Heart right ventricle (tissue), 16 donors: ENCODE measurements at regions of chr3 and their contacts with region 1.

Region 1: DNA sequence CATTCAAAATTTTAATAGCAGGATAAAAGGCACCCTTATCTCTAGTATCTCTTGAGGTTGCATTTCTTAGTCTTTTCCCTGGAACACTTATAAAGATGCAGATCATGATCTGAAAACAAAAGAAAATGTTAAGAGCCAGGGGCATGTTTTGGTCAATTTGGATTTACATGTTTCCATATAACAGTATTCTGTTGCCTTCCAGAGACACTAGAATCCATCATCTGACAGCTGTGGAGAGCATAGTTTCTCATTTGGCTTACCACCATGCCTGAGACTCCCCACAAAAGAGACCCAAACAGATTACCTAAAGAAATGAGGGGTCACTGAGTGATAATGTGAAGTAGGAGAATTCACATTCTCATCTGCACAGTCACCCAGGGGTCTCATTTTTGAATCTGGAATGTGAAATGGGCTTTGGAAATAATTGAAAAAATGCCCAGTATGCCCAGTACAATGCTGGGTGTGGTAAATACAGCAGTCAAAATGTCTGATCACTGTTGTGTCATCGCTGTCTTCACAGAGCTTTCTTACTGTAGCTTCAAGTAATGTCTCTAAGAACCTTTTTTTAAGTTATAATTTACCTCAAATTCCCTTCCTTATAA is 79.9 kb upstream of the ZBTB20 start:
- DNase-seq: no peak
- ATAC-seq: no peak
- H3K4me3 ChIP-seq: no peak overlapping the region
- H3K27ac ChIP-seq: no peak overlapping the region
- H3K4me1 ChIP-seq: peaks cover 0 to 9% (median 0%) of the 10 kb centered on the region in 9 donors
- H3K27me3 ChIP-seq: no peaks in the 10 kb centered on the region
- CTCF ChIP-seq: no peak

Region 2: DNA sequence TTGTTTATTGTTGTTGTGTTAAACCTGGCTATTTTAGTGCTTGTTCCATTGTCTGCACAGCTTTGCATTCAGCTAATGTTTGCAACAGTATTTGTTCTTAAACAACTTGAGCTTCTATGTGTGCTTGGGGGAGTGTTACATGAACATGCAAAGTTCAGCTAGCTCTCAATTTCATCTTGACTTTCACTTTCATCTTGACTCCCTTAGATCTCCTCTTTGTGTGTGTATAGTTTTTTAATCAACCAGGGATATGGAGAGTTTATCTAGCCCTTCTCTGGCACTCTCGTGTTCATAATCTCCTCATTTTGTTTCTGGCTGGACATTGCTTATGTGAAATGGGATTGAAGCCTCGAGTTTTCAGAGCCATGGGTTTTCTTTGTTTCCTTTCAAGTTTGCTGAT is 132.6 kb after region 1 on chr3:
- intact Hi-C with region 1: loop called in 1 of 10 experiments (anchors 10 kb)
- DNase-seq: no peak
- ATAC-seq: no peak
- H3K4me3 ChIP-seq: no peak overlapping the region
- H3K27ac ChIP-seq: no peak overlapping the region
- H3K4me1 ChIP-seq: peaks cover 0 to 11% (median 3%) of the 10 kb centered on the region in 9 donors
- H3K27me3 ChIP-seq: no peaks in the 10 kb centered on the region
- CTCF ChIP-seq: no peak

Region 3: DNA sequence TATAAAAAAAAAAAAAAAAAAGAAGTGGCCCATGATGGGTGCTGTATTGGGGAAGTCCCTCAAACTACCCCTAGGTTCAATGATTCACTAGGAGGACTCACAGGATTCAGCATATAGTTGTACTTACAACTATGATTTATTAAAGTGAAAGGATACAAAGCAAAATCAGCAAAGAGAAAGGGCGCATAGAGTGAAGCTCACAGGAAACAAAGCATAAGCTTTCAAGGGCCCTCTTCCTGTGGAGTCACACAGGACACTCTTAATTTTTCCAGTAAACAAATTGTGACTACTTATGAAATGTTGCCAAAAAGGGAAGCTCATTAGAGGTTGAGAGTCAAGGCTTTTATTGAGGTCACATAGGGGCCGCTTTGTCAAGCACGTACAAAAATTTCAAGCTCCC is 242.7 kb after region 1 on chr3:
- intact Hi-C with region 1: no loop called
- DNase-seq: no peak
- ATAC-seq: no peak
- H3K4me3 ChIP-seq: no peak overlapping the region
- H3K27ac ChIP-seq: no peak overlapping the region
- H3K4me1 ChIP-seq: peaks cover 0 to 5% (median 0%) of the 10 kb centered on the region in 9 donors
- H3K27me3 ChIP-seq: no peaks in the 10 kb centered on the region
- CTCF ChIP-seq: no peak

Region 4: GRCh38 chr3:115766587-115767480 is 539.9 kb after region 1 on chr3:
- intact Hi-C with region 1: no loop called
- DNase-seq: no peak
- ATAC-seq: peak in 1 of 8 donors; percentile 53
- H3K4me3 ChIP-seq: no peak overlapping the region
- H3K27ac ChIP-seq: peak overlapping the region in 1 of 10 donors; percentile 14
- H3K4me1 ChIP-seq: peaks cover 0 to 14% (median 0%) of the 10 kb centered on the region in 9 donors
- H3K27me3 ChIP-seq: no peaks in the 10 kb centered on the region
- CTCF ChIP-seq: no peak

Region 5: DNA sequence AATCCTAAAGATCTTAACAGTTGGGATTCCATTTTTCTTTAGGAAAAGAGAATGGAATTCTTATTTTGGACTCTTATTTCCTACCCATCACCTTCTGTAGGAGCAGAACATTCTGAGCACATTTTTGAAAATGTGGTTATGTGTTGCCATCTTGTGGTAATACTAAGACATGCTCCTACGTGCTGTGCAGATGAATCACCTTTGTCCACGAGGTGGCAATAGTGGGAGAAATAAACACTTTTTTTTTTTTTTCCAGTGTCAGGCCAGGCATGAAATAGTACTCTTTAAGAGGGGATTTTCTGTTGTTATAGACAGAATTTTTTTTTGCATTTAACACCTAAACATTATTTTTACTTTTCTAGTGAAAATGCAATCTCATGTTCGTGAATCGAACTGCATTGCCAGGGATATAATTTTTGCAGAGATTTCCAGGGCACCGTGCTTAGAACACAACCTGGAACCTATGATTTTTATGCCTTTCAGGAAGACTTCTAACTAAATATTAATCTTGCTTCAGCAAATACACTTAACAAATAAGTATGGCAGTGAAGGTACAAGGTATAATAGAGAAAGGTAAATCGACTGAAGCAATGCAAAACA is 592.9 kb after region 1 on chr3:
- intact Hi-C with region 1: loop called in 1 of 10 experiments (anchors 5 kb)
- DNase-seq: peak in 1 of 2 donors; percentile 77
- ATAC-seq: peak; percentile 70 to 84 (median 75)
- H3K4me3 ChIP-seq: no peak overlapping the region
- H3K27ac ChIP-seq: no peak overlapping the region
- H3K4me1 ChIP-seq: no peaks in the 10 kb centered on the region
- H3K27me3 ChIP-seq: no peaks in the 10 kb centered on the region
- CTCF ChIP-seq: peak; percentile 79 to 100 (median 94)